PC-9 (cell line): ENCODE measurements at regions of chr2 and their contacts with region 1.

Region 1: DNA sequence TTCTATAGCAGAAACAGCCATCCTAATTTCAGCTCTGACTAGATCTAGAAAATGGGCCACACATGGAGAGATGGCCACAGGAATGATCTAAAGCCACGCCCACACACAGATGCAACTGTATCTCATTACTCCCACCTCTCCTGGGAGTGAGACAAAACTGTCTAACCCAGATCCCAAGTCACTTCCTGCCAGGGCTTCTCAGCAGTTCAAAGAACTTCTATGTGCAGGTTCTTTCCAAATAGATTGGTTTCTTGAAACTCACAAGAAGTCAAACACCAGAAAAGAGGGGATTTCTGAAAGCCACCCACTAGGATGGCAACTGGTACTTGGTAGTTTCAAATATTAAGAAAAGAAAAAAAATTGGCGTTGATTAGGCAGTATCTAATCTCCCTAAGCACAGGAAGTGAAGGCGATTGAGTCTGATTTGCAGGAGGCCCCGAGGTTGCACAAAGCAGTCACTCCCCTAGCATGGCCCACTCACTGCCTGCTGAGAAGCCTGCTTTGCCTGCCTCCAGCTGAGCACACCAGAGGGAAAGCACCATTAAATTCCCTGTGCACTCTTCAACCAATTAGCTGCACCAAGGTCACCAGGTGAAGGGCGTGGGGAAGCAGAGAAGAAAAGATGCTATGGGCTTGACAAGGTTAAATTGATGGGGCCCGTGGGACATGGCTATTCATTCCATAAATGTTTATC is 51.1 kb downstream of the PAPOLG start:
- DNase-seq: no peak
- H3K4me3 ChIP-seq: no peak overlapping the region
- H3K27ac ChIP-seq: no peak overlapping the region
- H3K4me1 ChIP-seq: no peaks in the 10 kb centered on the region
- H3K27me3 ChIP-seq: no peaks in the 10 kb centered on the region
- CTCF ChIP-seq: no peak

Region 2: DNA sequence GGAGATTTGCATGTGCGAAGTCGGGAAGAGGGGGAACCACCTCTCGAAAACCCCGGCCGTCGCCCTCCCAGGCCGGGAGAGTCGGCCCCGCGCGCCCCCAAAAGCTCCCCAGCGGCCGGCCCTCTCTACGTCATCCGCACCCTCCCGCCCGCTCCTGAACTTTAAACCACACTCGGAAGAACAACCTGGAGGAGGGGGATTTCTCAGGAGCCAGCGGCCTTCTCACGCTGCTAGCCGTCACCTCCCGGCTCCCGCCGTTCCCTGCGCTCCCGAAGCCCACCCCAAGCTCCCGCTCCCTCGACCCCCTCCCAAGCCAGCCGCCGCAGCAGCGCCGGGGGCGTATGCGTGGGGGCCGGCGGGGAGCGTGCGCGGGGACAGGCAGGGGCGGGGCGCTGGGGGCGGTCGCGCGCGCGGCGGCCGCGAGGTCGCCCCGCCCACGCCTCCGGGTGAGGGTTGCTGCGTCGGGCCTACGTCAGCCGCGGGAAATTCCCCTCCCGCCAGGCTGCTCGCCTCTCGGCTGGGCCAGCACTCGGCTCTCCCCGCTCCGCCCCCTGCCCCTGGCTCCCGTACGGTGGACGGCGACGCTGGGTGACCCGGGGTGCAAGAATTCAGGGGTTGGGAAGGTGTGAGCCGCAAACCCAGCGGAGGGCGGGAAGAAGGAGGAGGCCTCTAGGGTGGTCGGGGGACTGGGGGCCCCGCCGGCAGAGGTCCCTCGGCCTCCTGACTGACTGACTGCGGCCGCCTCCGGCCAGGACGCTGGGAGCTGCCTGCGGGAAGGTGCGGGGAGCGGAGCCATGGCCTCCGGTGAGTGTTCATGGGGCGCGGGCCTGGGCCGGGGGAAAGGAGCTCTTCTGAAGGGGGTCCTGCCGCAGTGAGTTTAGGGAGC is 74.2 kb after region 1 on chr2 and contains the start of gene REL:
- CTCF ChIA-PET with region 1: interaction called, 3 read pairs
- POLR2A ChIA-PET with region 1: no interaction called
- intact Hi-C with region 1: loop called (anchors 5 kb)
- DNase-seq: peak; percentile 74 to 92
- H3K4me3 ChIP-seq: peak within 1 kb of the TSS; percentile 78
- H3K27ac ChIP-seq: peak within 1 kb of the TSS; percentile 83
- H3K4me1 ChIP-seq: peaks cover 36% of the 10 kb centered on the region
- H3K27me3 ChIP-seq: no peaks in the 10 kb centered on the region
- CTCF ChIP-seq: no peak
- total RNA-seq, gene REL: 12.5 and 13.3 TPM in 2 replicates